GM10248 (cell line): ENCODE measurements at regions of chr14 and their contacts with region 1.

Region 1: GRCh38 chr14:35365130-35366055 is 39.2 kb downstream of the NFKBIA start:
- DNase-seq: peak; percentile 69
- CTCF ChIP-seq: no peak

Region 2: DNA sequence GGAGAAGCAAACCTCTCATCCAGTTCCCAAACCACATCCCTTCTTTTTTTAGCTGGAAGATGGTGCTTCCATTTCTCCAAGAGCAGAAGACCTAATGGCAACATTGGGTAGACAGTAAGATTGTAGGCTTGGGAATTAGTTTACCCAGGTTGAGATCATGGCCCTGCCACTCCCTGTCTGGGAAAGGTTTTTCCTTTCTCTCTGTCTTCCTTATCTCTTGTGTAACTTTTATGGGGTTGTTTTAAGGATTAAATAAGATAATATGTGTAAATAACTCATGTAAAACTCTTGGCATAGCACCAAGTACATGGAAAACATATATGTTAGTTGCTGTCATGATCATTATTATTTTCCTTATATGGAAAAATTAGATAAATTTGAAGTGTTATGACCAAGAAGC is 96.4 kb before region 1 on chr14:
- CTCF ChIA-PET with region 1: no interaction called
- POLR2A ChIA-PET with region 1: no interaction called
- DNase-seq: no peak
- CTCF ChIP-seq: no peak

Region 3: DNA sequence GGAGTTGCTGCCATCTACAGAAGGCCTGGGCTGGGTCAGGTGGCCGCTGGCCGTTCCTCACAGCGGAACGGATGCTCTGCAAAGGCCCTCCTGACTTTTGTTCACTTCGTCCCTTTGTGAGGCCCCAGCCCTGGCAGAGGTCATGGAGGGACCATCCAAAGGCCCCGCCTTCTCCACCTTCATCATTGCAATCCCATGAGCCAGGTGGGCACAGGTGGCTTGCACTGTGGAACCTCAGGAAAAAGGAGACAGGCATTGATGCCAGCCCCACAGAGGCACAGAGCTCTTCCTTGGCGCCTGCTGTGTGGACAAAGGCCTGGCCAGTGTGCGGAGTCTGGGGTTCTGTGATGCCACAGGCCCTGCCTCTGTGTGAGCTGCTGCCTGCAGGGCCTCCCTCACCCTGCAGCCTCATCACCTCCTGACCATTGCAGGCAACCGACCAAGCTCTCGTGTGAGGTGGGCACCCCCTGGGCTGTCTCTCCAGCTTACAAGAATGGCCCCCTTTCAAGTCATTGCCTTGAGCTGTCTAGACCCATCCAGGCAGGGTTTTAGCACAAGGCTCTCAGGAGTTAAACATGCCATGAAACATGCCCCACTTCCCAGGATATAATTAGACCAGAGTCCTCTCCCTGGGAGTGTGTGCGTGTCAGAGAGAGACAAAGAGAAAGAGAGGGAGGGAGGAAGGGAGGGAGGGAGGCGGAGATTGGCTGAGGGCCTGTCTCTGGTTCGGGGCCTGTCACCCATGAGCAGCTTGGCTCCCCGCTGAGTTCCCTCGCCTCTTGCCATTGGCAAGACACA is 19.8 kb after region 1 on chr14:
- CTCF ChIA-PET with region 1: interaction called, 11 read pairs
- POLR2A ChIA-PET with region 1: no interaction called
- DNase-seq: no peak
- CTCF ChIP-seq: no peak